Caco-2 (cell line): ENCODE measurements at regions of chr3 and their contacts with region 1.

Region 1: GRCh38 chr3:101069901-101070798 is 76.9 kb upstream of the ABI3BP start:
- DNase-seq: peak; percentile 81 to 85
- H3K4me3 ChIP-seq: no peak overlapping the region
- H3K4me3 Mint-ChIP-seq: peak overlapping the region; percentile 8
- H3K27ac Mint-ChIP-seq: peak overlapping the region; percentile 74
- H3K4me1 ChIP-seq: peaks cover 8% of the 10 kb centered on the region
- H3K4me1 Mint-ChIP-seq: peaks cover 32% of the 10 kb centered on the region
- H3K27me3 ChIP-seq: no peaks in the 10 kb centered on the region
- H3K27me3 Mint-ChIP-seq: no peaks in the 10 kb centered on the region
- CTCF ChIP-seq: peak; percentile 80 to 86

Region 2: GRCh38 chr3:100893590-100893989 is 176.6 kb before region 1 on chr3:
- CTCF ChIA-PET with region 1: no interaction called
- POLR2A ChIA-PET with region 1: no interaction called
- intact Hi-C with region 1: loop called (anchors 10 kb)
- DNase-seq: peak in 1 of 2 experiments; percentile 15
- H3K4me3 ChIP-seq: no peak overlapping the region
- H3K4me3 Mint-ChIP-seq: no peak overlapping the region
- H3K27ac Mint-ChIP-seq: no peak overlapping the region
- H3K4me1 ChIP-seq: no peaks in the 10 kb centered on the region
- H3K4me1 Mint-ChIP-seq: no peaks in the 10 kb centered on the region
- H3K27me3 ChIP-seq: no peaks in the 10 kb centered on the region
- H3K27me3 Mint-ChIP-seq: peaks cover 6% of the 10 kb centered on the region
- CTCF ChIP-seq: peak; percentile 32 to 46

Region 3: GRCh38 chr3:101036213-101036618 is 33.9 kb before region 1 on chr3:
- CTCF ChIA-PET with region 1: interaction called, 4 read pairs
- POLR2A ChIA-PET with region 1: no interaction called
- intact Hi-C with region 1: loop called (anchors 1 kb)
- DNase-seq: peak; percentile 77 to 84
- H3K4me3 ChIP-seq: no peak overlapping the region
- H3K4me3 Mint-ChIP-seq: peak overlapping the region; percentile 28
- H3K27ac Mint-ChIP-seq: peak overlapping the region; percentile 88
- H3K4me1 ChIP-seq: peaks cover 25% of the 10 kb centered on the region
- H3K4me1 Mint-ChIP-seq: peaks cover 18% of the 10 kb centered on the region
- H3K27me3 ChIP-seq: no peaks in the 10 kb centered on the region
- H3K27me3 Mint-ChIP-seq: no peaks in the 10 kb centered on the region
- CTCF ChIP-seq: no peak

Region 4: DNA sequence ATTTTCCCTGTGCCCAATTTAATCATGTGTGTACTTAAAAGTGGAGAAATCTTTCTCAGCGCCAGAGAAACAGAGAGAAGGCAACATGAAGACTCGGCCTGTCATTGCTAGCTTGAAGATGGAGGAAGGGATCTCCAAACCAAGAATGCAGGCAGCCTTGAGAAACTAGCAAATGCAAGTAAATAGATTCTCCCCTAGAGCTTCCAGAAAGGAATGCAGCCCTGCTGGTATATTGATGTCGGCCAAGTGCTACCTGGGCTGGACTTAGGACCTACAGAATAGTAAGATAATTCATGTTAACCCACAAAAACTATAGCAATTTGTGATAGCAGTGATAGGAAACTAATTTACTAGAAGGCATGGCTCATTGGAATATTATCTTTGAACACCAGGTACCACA is 74.0 kb after region 1 on chr3:
- CTCF ChIA-PET with region 1: interaction called, 7 read pairs
- POLR2A ChIA-PET with region 1: no interaction called
- intact Hi-C with region 1: loop called (anchors 2 kb)
- DNase-seq: peak; percentile 50 to 54
- H3K4me3 ChIP-seq: no peak overlapping the region
- H3K4me3 Mint-ChIP-seq: no peak overlapping the region
- H3K27ac Mint-ChIP-seq: no peak overlapping the region
- H3K4me1 ChIP-seq: peaks cover 21% of the 10 kb centered on the region
- H3K4me1 Mint-ChIP-seq: peaks cover 5% of the 10 kb centered on the region
- H3K27me3 ChIP-seq: no peaks in the 10 kb centered on the region
- H3K27me3 Mint-ChIP-seq: no peaks in the 10 kb centered on the region
- CTCF ChIP-seq: no peak